Activated T-helper 1 cell treated with anti-CD3 and anti-CD28 coated beads, Interleukin-12 subunit alpha, Interleukin-12 subunit beta, Interleukin-2, Interleukin-4 antibody, amounts not matched to agents 30 ng/mL and 10 ng/mL and 1 ng/mL, durations not matched to agents 14 hours and 24 hours and 36 hours (primary cell): ENCODE measurements at regions of chr3 and their contacts with region 1.

Region 1: DNA sequence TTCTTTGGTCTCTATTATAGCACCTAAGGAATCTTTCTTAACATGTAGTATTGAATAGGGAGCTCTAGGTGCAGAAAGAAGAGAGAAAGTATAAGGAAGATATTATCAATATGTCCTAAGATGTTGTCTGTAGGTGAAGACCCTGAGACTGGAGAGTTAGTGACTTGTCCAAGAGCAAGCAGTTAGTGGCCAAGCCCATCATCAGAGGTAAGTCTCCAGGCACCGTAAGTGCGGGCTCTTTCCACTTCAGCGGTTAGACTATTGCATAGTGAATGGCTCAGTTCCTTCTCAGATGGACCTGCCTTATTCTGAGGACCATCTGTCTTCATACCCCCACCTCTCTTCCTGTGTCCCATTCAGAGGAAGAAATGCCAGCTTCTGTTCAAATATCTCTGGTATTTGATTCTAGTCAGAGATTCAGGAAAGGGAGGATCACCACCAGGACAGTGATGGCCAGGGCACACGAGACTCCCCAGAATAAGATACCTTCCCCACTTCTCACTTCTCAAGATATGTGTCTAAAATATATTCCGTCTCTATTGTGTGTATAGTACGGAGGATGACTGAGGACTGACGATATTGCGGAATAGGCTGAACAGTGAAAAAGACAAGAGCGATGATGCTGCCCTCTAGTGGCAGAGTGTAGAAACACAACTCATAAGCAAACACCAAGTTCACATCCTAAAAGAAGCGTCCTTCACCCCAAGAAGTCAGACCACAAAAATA is 19.1 kb upstream of the ADGRG7 start:
- DNase-seq: peak; percentile 53
- H3K4me3 Mint-ChIP-seq: no peak overlapping the region
- H3K27ac Mint-ChIP-seq: no peak overlapping the region
- H3K4me1 Mint-ChIP-seq: peaks cover 9% of the 10 kb centered on the region
- H3K27me3 Mint-ChIP-seq: peaks cover 4% of the 10 kb centered on the region

Region 2: DNA sequence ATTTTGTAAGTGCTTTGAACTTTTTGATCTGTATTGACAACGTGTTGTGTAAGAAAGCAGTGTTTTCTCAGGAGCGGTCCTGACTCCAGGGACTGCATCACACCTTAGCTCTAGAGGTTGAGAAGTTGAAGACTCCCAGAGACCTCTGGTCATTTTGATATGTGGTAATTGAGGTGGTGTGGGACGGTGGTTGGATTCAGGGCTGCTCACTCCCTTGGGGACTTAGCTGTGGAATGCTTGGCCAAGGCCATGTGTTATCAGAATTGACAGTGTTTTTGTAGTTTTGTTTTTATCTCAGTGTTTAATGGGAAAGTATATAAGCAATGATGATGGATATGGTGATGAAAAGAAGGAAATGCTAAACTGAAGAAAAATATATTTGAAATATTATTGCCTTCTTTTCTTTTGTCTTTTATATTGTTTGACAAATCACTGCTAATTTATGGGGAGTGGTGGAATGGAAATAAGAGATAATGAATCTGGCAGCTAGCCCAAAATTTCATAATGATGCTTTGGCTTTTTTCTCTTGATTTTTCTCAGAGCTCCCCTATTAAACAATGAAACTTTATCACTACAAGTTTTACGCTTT is 756.6 kb before region 1 on chr3:
- intact Hi-C with region 1: loop called (anchors 2 kb)
- DNase-seq: no peak
- H3K4me3 Mint-ChIP-seq: no peak overlapping the region
- H3K27ac Mint-ChIP-seq: no peak overlapping the region
- H3K4me1 Mint-ChIP-seq: peaks cover 12% of the 10 kb centered on the region
- H3K27me3 Mint-ChIP-seq: no peaks in the 10 kb centered on the region

Region 3: GRCh38 chr3:100260685-100261484 is 329.4 kb before region 1 on chr3 and contains the start of gene TBC1D23:
- intact Hi-C with region 1: loop called (anchors 5 kb)
- DNase-seq: peak; percentile 97
- H3K4me3 Mint-ChIP-seq: peak within 1 kb of the TSS; percentile 92
- H3K27ac Mint-ChIP-seq: peak within 1 kb of the TSS; percentile 97
- H3K4me1 Mint-ChIP-seq: peaks cover 38% of the 10 kb centered on the region
- H3K27me3 Mint-ChIP-seq: no peaks in the 10 kb centered on the region
- total RNA-seq, gene TBC1D23: 18.3 and 19.0 TPM in 2 replicates

Region 4: DNA sequence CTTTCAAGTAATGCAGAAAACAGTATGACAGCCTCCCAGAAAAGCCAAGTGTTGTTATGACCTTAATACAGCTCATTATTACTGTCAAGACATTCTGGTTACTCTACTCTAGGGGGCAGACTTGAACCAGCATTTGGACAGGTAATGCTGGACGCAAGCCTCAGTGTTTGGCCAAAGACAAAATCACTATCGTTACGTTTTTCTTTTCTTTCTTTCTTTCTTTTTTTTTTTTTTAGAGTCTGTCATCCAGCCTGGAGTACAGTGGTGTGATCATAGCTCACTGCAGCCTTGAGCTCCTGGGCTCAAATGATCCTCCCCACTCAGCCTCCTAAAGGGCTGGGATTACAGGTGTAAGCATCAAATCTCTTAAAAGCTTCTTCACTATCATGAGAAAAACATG is 127.3 kb before region 1 on chr3:
- intact Hi-C with region 1: loop called (anchors 1 kb)
- DNase-seq: no peak
- H3K4me3 Mint-ChIP-seq: no peak overlapping the region
- H3K27ac Mint-ChIP-seq: no peak overlapping the region
- H3K4me1 Mint-ChIP-seq: peaks cover 11% of the 10 kb centered on the region
- H3K27me3 Mint-ChIP-seq: peaks cover 2% of the 10 kb centered on the region

Region 5: GRCh38 chr3:100634493-100635272 is 44.4 kb after region 1 on chr3:
- intact Hi-C with region 1: loop called (anchors 5 kb)
- DNase-seq: peak; percentile 2
- H3K4me3 Mint-ChIP-seq: no peak overlapping the region
- H3K27ac Mint-ChIP-seq: no peak overlapping the region
- H3K4me1 Mint-ChIP-seq: peaks cover 9% of the 10 kb centered on the region
- H3K27me3 Mint-ChIP-seq: peaks cover 21% of the 10 kb centered on the region

Region 6: GRCh38 chr3:101758224-101758623 is 1167.9 kb after region 1 on chr3:
- intact Hi-C with region 1: no loop called
- DNase-seq: no peak
- H3K4me3 Mint-ChIP-seq: no peak overlapping the region
- H3K27ac Mint-ChIP-seq: no peak overlapping the region
- H3K4me1 Mint-ChIP-seq: peaks cover 19% of the 10 kb centered on the region
- H3K27me3 Mint-ChIP-seq: no peaks in the 10 kb centered on the region